CD8-positive, alpha-beta memory T cell (primary cell): ENCODE measurements at regions of chr10 and their contacts with region 1.

Region 1: DNA sequence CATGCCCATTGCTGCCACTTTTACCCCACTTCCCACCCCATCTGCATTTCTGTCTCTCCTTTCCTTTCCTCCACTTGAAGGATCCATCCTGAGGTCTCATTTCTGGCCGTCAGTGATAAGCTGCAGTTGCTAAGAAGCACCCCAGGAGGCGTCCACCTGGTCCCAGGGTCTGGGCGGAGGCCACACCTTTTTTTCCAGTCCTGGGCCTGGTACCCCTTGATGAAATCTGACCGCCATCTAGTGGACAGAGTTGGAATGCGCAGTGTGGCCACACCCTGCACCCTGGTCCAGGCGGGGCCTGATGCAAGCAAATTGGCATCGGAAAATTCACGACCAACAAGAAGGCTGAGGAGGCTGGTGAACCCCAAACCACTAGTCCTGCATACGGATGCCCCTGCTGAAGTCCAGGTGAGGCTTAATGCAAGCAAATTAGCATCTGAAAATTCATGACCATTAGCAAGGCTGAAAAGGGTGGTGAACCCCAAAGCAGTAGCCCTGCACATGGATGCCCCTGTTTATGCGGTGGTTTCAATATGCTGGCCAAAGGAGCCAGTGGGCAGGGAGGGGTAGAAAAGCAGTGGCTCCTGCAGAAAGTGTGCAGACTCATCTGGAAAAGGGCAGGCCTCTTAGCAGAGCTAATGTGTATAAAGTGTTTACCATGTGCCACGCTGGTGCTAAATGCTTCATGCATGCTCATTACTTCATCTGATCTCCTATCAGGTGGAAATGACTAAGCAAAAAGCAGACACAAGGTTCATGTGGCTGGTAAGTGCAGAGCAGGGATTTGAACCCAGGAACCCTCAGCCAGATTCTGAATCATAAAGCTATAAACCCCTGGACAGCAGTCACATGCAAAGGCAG is 43.2 kb downstream of the GPAM start:
- DNase-seq: peak; percentile 28 to 72 (median 41)
- H3K4me3 ChIP-seq: no peak overlapping the region
- H3K4me3 Mint-ChIP-seq: no peak overlapping the region
- H3K27ac ChIP-seq: no peak overlapping the region
- H3K27ac Mint-ChIP-seq: peak overlapping the region in 1 of 8 donors; percentile 43
- H3K4me1 ChIP-seq: no peaks in the 10 kb centered on the region
- H3K4me1 Mint-ChIP-seq: no peaks in the 10 kb centered on the region
- H3K27me3 ChIP-seq: no peaks in the 10 kb centered on the region
- H3K27me3 Mint-ChIP-seq: peaks cover 0 to 8% of the 10 kb centered on the region in 2 donors

Region 2: DNA sequence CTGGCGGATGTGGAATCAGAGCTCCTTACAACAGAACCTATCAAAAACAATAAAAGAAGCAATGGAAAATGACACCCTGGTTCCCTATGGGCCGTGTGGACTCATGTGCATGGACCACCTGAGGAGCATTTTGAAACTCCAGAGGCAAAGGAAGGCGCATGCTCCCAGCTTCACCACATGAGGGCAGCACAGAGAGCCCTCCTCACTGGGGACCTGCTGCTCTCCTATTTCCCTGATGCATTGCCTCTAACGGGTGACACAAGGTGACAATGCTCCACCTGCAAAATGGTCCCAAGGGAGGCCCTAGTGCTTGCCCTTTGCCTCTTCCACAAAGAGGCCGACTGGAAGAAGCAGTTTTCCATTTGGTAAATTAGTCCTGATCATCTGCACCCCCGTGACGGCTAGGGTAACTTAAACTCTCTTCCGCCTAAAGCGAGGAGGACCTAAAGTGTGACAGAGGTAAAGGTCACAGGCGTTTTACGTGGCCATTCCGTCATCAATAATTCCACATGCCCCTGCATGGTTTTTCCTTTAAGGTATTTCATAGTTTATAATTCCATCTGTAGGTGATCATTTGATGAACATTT is 24.4 kb before region 1 on chr10:
- CTCF ChIA-PET with region 1: interaction called, 10 read pairs
- POLR2A ChIA-PET with region 1: no interaction called
- DNase-seq: peak in 1 of 5 donors; percentile 19
- H3K4me3 ChIP-seq: no peak overlapping the region
- H3K4me3 Mint-ChIP-seq: no peak overlapping the region
- H3K27ac ChIP-seq: no peak overlapping the region
- H3K27ac Mint-ChIP-seq: no peak overlapping the region
- H3K4me1 ChIP-seq: no peaks in the 10 kb centered on the region
- H3K4me1 Mint-ChIP-seq: no peaks in the 10 kb centered on the region
- H3K27me3 ChIP-seq: no peaks in the 10 kb centered on the region
- H3K27me3 Mint-ChIP-seq: peaks cover 4% of the 10 kb centered on the region in 2 donors

Region 3: DNA sequence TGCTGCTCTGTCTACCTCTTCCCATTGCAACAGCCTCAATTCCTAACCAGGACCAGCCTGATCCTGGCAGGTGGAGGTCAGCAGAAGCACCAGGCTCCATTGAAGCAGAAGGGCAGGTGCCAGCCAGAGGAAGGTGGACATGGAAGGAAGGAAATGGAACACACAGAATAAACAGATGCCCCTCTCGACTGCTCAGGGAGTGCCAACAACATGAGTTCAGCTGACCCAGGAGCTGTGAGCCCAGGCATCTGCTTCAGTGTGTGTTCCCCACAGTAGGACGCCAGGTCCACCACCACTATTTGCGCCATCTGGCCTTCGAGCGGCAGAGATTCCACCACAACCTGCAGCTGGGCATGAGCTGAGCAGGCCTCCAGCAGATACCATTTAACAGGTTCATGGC is 13.4 kb before region 1 on chr10:
- CTCF ChIA-PET with region 1: interaction called, 24 read pairs
- POLR2A ChIA-PET with region 1: no interaction called
- DNase-seq: no peak
- H3K4me3 ChIP-seq: no peak overlapping the region
- H3K4me3 Mint-ChIP-seq: no peak overlapping the region
- H3K27ac ChIP-seq: no peak overlapping the region
- H3K27ac Mint-ChIP-seq: no peak overlapping the region
- H3K4me1 ChIP-seq: no peaks in the 10 kb centered on the region
- H3K4me1 Mint-ChIP-seq: no peaks in the 10 kb centered on the region
- H3K27me3 ChIP-seq: no peaks in the 10 kb centered on the region
- H3K27me3 Mint-ChIP-seq: peaks cover 6 to 10% of the 10 kb centered on the region in 2 donors

Region 4: DNA sequence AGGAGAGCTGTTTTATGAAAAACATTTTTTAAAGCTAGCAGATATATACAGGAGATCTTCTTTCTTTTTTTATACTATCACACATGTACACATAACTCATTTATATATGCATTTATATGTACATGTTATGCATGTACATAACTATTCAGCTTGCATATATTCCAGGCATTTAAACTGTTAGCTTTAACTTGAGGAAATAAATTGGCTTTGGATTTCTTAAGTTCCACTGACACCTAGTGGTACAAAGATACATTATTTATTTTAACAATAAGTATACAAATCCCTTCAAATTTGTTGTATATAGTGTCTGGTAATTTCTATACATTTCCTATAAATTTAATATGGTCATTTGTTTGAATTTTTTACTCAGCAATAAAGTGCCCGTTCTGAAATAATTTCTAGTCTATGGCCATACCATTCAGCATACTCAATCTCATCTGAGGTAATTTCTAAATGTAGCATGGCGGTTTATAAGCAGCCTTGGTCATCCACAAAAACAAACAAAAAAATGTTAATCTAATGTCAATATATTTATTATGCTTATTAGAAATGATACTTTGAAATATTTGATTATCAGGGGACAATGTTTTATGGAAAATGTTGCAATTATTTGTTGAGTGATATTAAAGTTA is 294.8 kb after region 1 on chr10:
- CTCF ChIA-PET with region 1: interaction called, 10 read pairs
- POLR2A ChIA-PET with region 1: no interaction called
- DNase-seq: peak in 2 of 5 donors; percentile 7 to 22
- H3K4me3 ChIP-seq: no peak overlapping the region
- H3K4me3 Mint-ChIP-seq: no peak overlapping the region
- H3K27ac ChIP-seq: no peak overlapping the region
- H3K27ac Mint-ChIP-seq: peak overlapping the region in 1 of 8 donors; percentile 27
- H3K4me1 ChIP-seq: no peaks in the 10 kb centered on the region
- H3K4me1 Mint-ChIP-seq: peaks cover 0 to 3% (median 2%) of the 10 kb centered on the region in 3 donors
- H3K27me3 ChIP-seq: no peaks in the 10 kb centered on the region
- H3K27me3 Mint-ChIP-seq: no peaks in the 10 kb centered on the region

Region 5: GRCh38 chr10:112755446-112756237 is 615.3 kb after region 1 on chr10:
- CTCF ChIA-PET with region 1: no interaction called
- POLR2A ChIA-PET with region 1: no interaction called
- DNase-seq: no peak
- H3K4me3 ChIP-seq: no peak overlapping the region
- H3K4me3 Mint-ChIP-seq: no peak overlapping the region
- H3K27ac ChIP-seq: no peak overlapping the region
- H3K27ac Mint-ChIP-seq: no peak overlapping the region
- H3K4me1 ChIP-seq: no peaks in the 10 kb centered on the region
- H3K4me1 Mint-ChIP-seq: no peaks in the 10 kb centered on the region
- H3K27me3 ChIP-seq: no peaks in the 10 kb centered on the region
- H3K27me3 Mint-ChIP-seq: no peaks in the 10 kb centered on the region